Psoas muscle (tissue), 8 donors: ENCODE measurements at regions of chr18 and their contacts with region 1.

Region 1: DNA sequence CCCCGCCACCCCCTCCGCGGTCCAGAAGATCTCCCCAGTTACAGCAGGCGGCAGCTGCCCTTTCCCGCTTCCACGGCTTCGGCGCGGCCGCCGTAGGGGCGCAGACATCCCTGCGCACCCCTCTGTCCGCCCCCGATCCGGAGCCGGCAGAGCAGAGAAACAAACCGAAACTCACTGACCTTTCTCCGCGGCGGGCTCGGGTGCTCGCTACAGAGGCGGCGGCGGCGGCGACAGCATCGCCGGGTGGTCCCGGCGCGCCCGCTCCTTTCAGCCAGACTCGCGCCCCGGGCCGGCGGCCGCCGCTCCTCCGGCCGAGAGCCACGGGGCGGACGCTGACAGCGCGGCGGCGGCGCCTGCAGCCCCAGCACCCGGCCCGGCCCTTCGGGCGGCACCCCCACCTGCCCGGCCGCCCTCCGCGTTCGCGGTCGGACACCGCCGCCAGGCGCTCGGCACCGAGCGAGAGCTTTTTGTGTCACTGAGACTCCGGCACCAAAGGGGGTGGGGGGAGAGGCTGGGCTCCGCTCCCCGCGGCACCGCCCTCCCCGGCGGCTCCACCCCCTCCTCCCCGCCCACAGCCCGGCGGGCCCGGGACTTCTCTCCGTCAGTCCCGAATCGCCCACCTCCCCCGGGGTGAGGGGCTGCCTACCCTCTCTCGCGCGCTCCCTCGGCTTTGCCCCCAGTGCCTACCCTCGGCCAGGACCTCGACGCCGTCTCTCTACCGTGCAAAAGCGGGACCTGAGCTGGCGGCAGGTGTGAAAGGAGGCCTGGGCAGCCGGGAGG is 1.4 kb upstream of the RNF152 start:
- DNase-seq: peak; percentile 69 to 85
- ATAC-seq: peak; percentile 83 to 94 (median 86)
- H3K4me3 ChIP-seq: peak overlapping the region; percentile 83
- H3K27ac ChIP-seq: peak overlapping the region; percentile 61
- H3K4me1 ChIP-seq: no peaks in the 10 kb centered on the region
- H3K27me3 ChIP-seq: peaks cover 0 to 53% (median 2%) of the 10 kb centered on the region in 3 donors
- CTCF ChIP-seq: peak; percentile 30

Region 2: DNA sequence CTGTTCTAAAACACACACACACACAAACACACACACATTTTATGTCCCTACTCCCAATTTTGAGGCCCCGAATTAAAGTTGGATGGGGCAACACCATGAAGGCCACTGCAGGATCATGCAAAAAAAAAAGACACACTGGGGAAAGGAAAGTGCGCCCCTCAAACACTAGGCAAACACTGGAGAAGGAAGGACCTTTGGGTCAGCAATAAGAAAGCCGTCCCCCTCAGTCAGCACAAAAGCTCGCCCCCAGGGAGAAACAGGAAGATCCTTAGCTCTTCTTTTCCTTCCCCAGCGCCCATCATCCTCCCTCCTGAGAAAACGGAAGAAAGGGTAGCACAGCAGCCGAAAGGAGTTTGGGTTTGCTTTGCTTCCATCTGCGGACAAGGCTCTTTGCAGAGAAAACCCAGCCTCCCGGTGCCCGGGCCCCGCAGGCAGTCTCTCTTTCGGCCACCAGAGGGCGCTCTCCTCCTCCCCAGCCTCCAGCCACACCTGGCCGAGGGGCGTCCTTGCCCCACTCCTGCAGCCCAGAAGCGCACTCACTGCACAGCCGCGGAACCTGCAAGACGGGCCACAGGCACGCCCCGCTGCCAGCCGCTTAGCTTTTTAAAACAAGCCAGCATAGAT is 312.5 kb before region 1 on chr18:
- intact Hi-C with region 1: loop called in 1 of 2 experiments (anchors 5 kb)
- DNase-seq: peak; percentile 60 to 81
- ATAC-seq: peak; percentile 68 to 93 (median 79)
- H3K4me3 ChIP-seq: peak overlapping the region; percentile 52
- H3K27ac ChIP-seq: no peak overlapping the region
- H3K4me1 ChIP-seq: no peaks in the 10 kb centered on the region
- H3K27me3 ChIP-seq: peaks cover 0 to 2% (median 0%) of the 10 kb centered on the region in 3 donors
- CTCF ChIP-seq: peak; percentile 96

Region 3: DNA sequence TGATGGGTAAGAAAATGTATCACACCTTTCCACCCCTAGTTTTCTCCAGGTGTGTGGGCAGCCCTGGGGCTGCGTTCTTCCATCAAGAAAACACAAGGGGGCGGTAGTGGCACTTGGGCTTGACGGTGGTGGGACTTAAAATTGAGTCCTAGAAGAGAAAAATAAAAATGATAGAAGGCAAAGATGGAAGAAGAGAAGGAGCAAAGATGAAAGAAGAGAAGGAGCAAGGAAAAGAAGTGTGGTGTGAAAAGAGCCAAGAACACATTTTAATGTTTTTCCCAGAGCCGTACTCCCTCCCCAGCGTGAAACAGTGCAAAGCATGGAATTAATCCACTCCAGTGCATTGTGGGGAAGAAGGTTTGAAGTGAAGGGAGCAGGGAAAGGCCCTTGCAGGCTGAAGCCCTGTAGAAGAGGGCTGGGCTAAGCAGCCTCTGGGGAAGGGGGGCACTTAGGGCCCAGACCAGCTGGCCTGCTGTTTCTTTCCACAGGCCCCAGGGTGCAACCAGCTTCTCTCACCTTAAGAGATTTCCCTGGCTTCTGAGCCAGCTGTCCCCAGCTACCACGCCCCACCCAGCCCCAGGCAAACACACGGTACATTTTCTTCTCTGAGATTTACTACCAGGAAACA is 258.1 kb before region 1 on chr18:
- intact Hi-C with region 1: loop called (anchors 5 kb)
- DNase-seq: no peak
- ATAC-seq: peak in 1 of 4 donors; percentile 51
- H3K4me3 ChIP-seq: no peak overlapping the region
- H3K27ac ChIP-seq: no peak overlapping the region
- H3K4me1 ChIP-seq: no peaks in the 10 kb centered on the region
- H3K27me3 ChIP-seq: no peaks in the 10 kb centered on the region
- CTCF ChIP-seq: peak; percentile 57

Region 4: GRCh38 chr18:61743775-61744531 is 150.2 kb before region 1 on chr18:
- intact Hi-C with region 1: loop called in 1 of 2 experiments (anchors 10 kb)
- DNase-seq: no peak
- ATAC-seq: peak in 2 of 4 donors; percentile 48 to 50
- H3K4me3 ChIP-seq: no peak overlapping the region
- H3K27ac ChIP-seq: peak overlapping the region; percentile 42
- H3K4me1 ChIP-seq: no peaks in the 10 kb centered on the region
- H3K27me3 ChIP-seq: no peaks in the 10 kb centered on the region
- CTCF ChIP-seq: no peak

Region 5: GRCh38 chr18:62402342-62402945 is 508.3 kb after region 1 on chr18:
- intact Hi-C with region 1: no loop called
- DNase-seq: no peak
- ATAC-seq: no peak
- H3K4me3 ChIP-seq: no peak overlapping the region
- H3K27ac ChIP-seq: no peak overlapping the region
- H3K4me1 ChIP-seq: no peaks in the 10 kb centered on the region
- H3K27me3 ChIP-seq: no peaks in the 10 kb centered on the region
- CTCF ChIP-seq: no peak